Psoas muscle (tissue), 8 donors: ENCODE measurements at regions of chr15 and their contacts with region 1.

Region 1: DNA sequence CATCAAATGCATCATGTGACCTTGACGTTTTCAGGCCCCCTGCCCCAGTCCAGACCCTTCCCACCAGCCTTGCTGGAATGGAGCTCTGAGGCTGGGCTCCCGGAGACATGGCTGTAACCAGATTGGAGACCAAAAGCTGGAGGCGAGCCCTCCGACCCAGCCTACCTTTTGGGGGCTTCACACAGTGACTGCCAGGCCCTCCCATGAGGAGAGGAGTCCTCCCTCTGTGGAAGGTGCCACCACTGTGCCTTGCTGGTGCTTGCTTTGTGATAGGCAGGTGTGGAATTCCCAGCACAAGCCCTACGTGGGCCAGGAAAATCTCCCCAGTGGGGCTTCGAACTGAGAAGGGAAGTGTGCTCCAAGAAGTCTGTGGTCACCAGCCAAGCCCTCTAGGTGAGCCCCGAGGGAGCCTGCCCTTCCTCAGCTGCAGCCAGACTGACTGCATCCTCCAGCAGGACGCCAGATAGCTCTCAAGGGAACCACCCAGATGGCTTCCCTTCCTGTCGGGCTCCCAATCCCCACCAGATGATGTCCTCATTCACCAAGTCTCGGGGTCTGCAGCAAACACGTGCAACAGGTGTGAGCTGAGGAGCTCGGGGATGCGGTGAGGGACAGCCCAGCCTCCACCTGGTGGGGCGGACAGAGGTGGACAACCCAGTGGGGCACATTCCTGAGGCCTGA is 126.3 kb downstream of the ASB7 start:
- DNase-seq: no peak
- ATAC-seq: no peak
- H3K4me3 ChIP-seq: no peak overlapping the region
- H3K27ac ChIP-seq: no peak overlapping the region
- H3K4me1 ChIP-seq: peaks cover 7% of the 10 kb centered on the region
- H3K27me3 ChIP-seq: no peaks in the 10 kb centered on the region
- CTCF ChIP-seq: no peak

Region 2: DNA sequence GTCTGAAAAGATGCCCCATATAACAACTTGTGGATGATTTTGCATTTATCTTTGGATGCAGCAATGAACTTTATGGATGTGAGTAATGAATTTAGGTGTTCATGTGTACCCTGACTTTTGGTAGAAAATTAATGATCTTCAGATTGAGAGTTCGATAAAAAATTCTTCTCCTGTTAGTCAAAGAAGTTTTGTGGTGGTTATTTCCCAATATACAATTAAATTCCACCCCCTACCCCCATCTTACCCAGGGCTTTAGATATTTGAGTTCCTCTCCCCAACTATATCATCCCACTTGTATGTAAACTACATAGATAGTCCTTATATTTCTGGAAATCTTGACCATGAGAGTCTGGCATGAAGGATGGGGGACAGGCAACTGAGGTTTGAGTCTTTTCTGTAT is 24.8 kb after region 1 on chr15:
- intact Hi-C with region 1: loop called in 1 of 2 experiments (anchors 2 kb)
- DNase-seq: no peak
- ATAC-seq: no peak
- H3K4me3 ChIP-seq: no peak overlapping the region
- H3K27ac ChIP-seq: no peak overlapping the region
- H3K4me1 ChIP-seq: no peaks in the 10 kb centered on the region
- H3K27me3 ChIP-seq: no peaks in the 10 kb centered on the region
- CTCF ChIP-seq: no peak